ENCODE measurements at regions of chr20 and their contacts with region 1.

Region 1: GRCh38 chr20:32091888-32092346 is 17.6 kb upstream of the TM9SF4 start:
- DNase-seq: peak; percentile 68
- ATAC-seq: peak; percentile 92
- H3K4me3 Mint-ChIP-seq: no peak overlapping the region
- H3K27ac Mint-ChIP-seq: no peak overlapping the region
- H3K4me1 Mint-ChIP-seq: peaks cover 14% of the 10 kb centered on the region
- H3K27me3 Mint-ChIP-seq: no peaks in the 10 kb centered on the region
- CTCF ChIP-seq: peak; percentile 70

Region 2: DNA sequence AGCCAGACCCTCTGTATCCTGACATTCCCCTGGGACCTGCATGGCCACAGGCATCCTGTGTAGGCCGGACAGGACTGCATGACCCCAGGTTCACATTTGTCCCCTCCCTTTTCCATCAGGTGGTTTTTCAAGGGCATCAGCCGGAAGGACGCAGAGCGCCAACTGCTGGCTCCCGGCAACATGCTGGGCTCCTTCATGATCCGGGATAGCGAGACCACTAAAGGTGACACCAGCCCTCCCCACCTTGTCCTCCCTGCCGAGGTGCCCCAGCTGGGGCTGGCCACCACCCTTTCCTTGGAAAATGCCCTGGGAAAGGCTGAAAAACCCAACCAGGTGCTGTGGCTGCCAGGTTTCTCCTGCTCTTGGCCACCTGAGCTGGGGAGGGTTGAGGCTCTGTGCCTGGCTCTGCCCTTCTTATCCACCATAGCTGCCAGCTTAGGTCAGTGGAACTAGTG is 12.2 kb before region 1 on chr20:
- CTCF ChIA-PET with region 1: interaction called, 18 read pairs
- POLR2A ChIA-PET with region 1: interaction called, 3 read pairs
- intact Hi-C with region 1: no loop called
- DNase-seq: no peak
- ATAC-seq: no peak
- H3K4me3 Mint-ChIP-seq: no peak overlapping the region
- H3K27ac Mint-ChIP-seq: no peak overlapping the region
- H3K4me1 Mint-ChIP-seq: no peaks in the 10 kb centered on the region
- H3K27me3 Mint-ChIP-seq: no peaks in the 10 kb centered on the region
- CTCF ChIP-seq: no peak

Measured in activated B cell treated with CpG ODN at 0.5 μM for 24 hours (primary cell).